ENCODE measurements at regions of chr6 and their contacts with region 1.

Region 1: DNA sequence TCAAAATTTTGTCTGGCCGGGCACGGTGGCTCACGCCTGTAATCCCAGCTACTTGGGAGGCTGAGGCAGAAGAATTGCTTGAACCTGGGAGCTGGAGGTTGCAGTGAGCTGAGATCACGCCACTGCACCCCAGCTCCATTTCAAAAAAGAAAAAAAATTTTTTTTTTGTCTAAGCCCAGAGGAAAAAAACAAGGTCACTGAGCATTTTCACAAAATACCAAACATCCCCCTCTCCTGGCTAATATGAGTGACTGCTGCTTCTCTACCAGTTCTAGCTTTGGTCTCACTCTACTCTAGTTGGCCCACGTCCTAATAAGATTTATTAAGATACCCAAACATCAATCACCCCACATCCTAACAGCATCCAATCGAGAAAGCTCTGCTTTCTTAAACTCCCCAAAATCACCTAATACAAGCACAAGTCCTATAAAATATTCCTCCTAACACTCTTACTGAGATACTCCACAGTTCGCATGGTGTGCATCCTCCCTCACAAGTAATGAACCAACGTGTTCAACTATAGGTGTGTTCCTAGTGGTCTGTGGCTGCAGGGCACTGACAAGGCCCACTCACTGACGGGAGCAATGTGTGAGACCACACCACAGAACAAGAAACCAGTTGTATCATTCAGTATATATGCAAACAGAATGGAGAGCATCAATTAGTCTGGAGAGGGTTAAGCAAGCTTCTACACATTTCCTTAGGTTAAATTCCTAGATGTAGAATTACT is 64.2 kb downstream of the FKBP5 start:
- DNase-seq: peak in 3 of 9 experiments; percentile 58 to 79 (median 64)
- ATAC-seq: peak; percentile 86
- H3K4me3 ChIP-seq: no peak overlapping the region
- H3K4me3 Mint-ChIP-seq: peak overlapping the region; percentile 30
- H3K27ac ChIP-seq: peak overlapping the region; percentile 14 to 23
- H3K27ac Mint-ChIP-seq: peak overlapping the region; percentile 91
- H3K4me1 ChIP-seq: peaks cover 47% of the 10 kb centered on the region
- H3K4me1 Mint-ChIP-seq: peaks cover 48% of the 10 kb centered on the region
- H3K27me3 ChIP-seq: no peaks in the 10 kb centered on the region
- H3K27me3 Mint-ChIP-seq: no peaks in the 10 kb centered on the region
- CTCF ChIP-seq: peak; percentile 70

Region 2: GRCh38 chr6:35522660-35523658 is 101.5 kb before region 1 on chr6:
- CTCF ChIA-PET with region 1: interaction called, 9 read pairs
- POLR2A ChIA-PET with region 1: interaction called, 3 read pairs
- intact Hi-C with region 1: loop called (anchors 1 to 2 kb)
- DNase-seq: peak; percentile 46 to 87 (median 76)
- ATAC-seq: peak; percentile 86
- H3K4me3 ChIP-seq: peak overlapping the region in 1 of 2 experiments; percentile 9
- H3K4me3 Mint-ChIP-seq: peak overlapping the region; percentile 69
- H3K27ac ChIP-seq: no peak overlapping the region
- H3K27ac Mint-ChIP-seq: peak overlapping the region; percentile 64
- H3K4me1 ChIP-seq: peaks cover 19% of the 10 kb centered on the region
- H3K4me1 Mint-ChIP-seq: peaks cover 23% of the 10 kb centered on the region
- H3K27me3 ChIP-seq: no peaks in the 10 kb centered on the region
- H3K27me3 Mint-ChIP-seq: no peaks in the 10 kb centered on the region
- CTCF ChIP-seq: peak; percentile 96

Region 3: GRCh38 chr6:35576682-35577081 is 47.8 kb before region 1 on chr6:
- CTCF ChIA-PET with region 1: interaction called, 762 read pairs
- POLR2A ChIA-PET with region 1: interaction called, 4 read pairs
- intact Hi-C with region 1: no loop called
- DNase-seq: no peak
- ATAC-seq: no peak
- H3K4me3 ChIP-seq: no peak overlapping the region
- H3K4me3 Mint-ChIP-seq: no peak overlapping the region
- H3K27ac ChIP-seq: no peak overlapping the region
- H3K27ac Mint-ChIP-seq: no peak overlapping the region
- H3K4me1 ChIP-seq: peaks cover 3% of the 10 kb centered on the region
- H3K4me1 Mint-ChIP-seq: peaks cover 7% of the 10 kb centered on the region
- H3K27me3 ChIP-seq: no peaks in the 10 kb centered on the region
- H3K27me3 Mint-ChIP-seq: no peaks in the 10 kb centered on the region
- CTCF ChIP-seq: no peak

Region 4: GRCh38 chr6:35601331-35602132 is 23.0 kb before region 1 on chr6:
- CTCF ChIA-PET with region 1: interaction called, 762 read pairs
- POLR2A ChIA-PET with region 1: interaction called, 68 read pairs
- intact Hi-C with region 1: loop called (anchors 1 kb)
- DNase-seq: peak; percentile 36 to 94 (median 69)
- ATAC-seq: peak; percentile 78
- H3K4me3 ChIP-seq: peak overlapping the region; percentile 27 to 47
- H3K4me3 Mint-ChIP-seq: peak overlapping the region; percentile 76
- H3K27ac ChIP-seq: peak overlapping the region; percentile 50 to 63
- H3K27ac Mint-ChIP-seq: peak overlapping the region; percentile 93
- H3K4me1 ChIP-seq: peaks cover 89% of the 10 kb centered on the region
- H3K4me1 Mint-ChIP-seq: peaks cover 76% of the 10 kb centered on the region
- H3K27me3 ChIP-seq: no peaks in the 10 kb centered on the region
- H3K27me3 Mint-ChIP-seq: no peaks in the 10 kb centered on the region
- CTCF ChIP-seq: no peak

Region 5: DNA sequence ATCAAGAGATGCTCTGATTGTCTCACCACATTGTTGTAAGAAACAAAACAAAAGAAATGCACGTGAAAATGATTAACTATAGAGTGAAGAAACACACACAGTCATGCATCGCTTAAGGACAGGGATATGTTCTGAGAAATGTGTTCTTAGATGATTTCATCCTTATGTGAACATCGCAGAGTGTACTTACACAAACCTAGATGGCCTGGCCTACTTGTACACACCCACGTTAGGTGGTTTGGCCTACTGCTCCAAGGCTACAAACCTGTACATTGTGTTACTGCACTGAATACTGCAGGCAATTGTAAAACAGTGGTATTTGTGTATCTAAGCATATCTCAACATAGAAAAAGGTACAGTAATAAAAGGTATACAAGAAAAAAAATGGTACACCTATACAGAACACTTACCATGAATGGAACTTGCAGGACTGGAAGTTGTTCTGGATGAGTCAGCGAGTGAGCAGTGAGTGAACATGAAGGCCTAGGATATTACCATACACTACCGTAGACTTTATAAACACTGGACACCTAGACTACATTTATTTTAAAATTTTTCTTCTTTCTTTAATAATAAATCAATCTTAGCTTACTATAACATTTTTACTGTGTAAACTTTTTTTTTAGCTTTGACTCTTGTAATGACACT is 15.6 kb after region 1 on chr6:
- CTCF ChIA-PET with region 1: interaction called, 27 read pairs
- POLR2A ChIA-PET with region 1: interaction called, 7 read pairs
- intact Hi-C with region 1: no loop called
- DNase-seq: no peak
- ATAC-seq: no peak
- H3K4me3 ChIP-seq: no peak overlapping the region
- H3K4me3 Mint-ChIP-seq: no peak overlapping the region
- H3K27ac ChIP-seq: no peak overlapping the region
- H3K27ac Mint-ChIP-seq: peak overlapping the region; percentile 83
- H3K4me1 ChIP-seq: peaks cover 21% of the 10 kb centered on the region
- H3K4me1 Mint-ChIP-seq: peaks cover 59% of the 10 kb centered on the region
- H3K27me3 ChIP-seq: no peaks in the 10 kb centered on the region
- H3K27me3 Mint-ChIP-seq: no peaks in the 10 kb centered on the region
- CTCF ChIP-seq: no peak

Region 6: DNA sequence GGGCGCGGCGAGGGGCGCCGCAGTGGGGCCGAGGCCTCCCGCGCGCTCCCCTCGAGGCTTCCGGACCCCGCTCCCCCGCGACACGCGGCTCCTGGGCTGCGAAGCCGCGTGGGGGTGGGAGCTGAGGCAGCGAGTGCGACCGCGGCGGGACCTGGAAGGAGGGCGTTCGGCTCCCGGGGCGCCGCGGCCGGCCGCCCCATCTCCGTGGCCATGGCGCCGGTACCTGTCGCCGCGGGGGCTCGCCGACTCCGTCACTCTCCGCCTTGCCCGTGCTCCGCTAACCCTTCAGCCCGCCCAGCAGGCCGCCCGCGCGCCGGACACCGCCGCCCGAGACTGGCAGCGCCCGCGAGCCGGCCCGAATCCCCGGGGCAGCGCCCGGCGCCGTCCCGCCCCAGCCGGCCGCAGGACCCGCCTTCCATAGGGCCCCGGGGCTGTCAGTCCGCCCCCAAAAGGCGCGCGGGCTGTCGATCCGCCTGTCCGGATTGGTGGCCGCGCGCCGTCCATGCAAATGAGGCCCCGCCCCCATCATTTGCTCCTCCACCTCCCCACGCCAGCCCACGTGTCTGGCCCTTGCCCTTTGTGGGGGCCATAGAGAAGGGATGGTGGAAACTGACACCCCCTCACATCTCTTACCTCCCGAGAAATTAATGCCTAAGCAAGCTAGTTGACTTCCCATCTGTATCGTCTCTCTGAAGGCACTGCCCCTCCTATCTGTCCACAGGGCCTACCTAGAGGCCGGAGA is 64.2 kb after region 1 on chr6 and contains the start of gene FKBP5:
- CTCF ChIA-PET with region 1: interaction called, 17 read pairs
- POLR2A ChIA-PET with region 1: no interaction called
- intact Hi-C with region 1: loop called in 1 of 2 experiments (anchors 2 kb)
- DNase-seq: peak; percentile 65 to 93 (median 87)
- ATAC-seq: peak; percentile 87
- H3K4me3 ChIP-seq: peak within 1 kb of the TSS; percentile 63 to 85
- H3K4me3 Mint-ChIP-seq: peak within 1 kb of the TSS; percentile 98
- H3K27ac ChIP-seq: peak within 1 kb of the TSS; percentile 48 to 64
- H3K27ac Mint-ChIP-seq: peak within 1 kb of the TSS; percentile 96
- H3K4me1 ChIP-seq: peaks cover 14% of the 10 kb centered on the region
- H3K4me1 Mint-ChIP-seq: peaks cover 17% of the 10 kb centered on the region
- H3K27me3 ChIP-seq: no peaks in the 10 kb centered on the region
- H3K27me3 Mint-ChIP-seq: no peaks in the 10 kb centered on the region
- CTCF ChIP-seq: no peak
- total RNA-seq, gene FKBP5: 25.7 to 27.1 TPM

Region 7: GRCh38 chr6:35786810-35787209 is 162.3 kb after region 1 on chr6:
- CTCF ChIA-PET with region 1: no interaction called
- POLR2A ChIA-PET with region 1: no interaction called
- intact Hi-C with region 1: no loop called
- DNase-seq: no peak
- ATAC-seq: no peak
- H3K4me3 ChIP-seq: no peak overlapping the region
- H3K4me3 Mint-ChIP-seq: no peak overlapping the region
- H3K27ac ChIP-seq: no peak overlapping the region
- H3K27ac Mint-ChIP-seq: no peak overlapping the region
- H3K4me1 ChIP-seq: no peaks in the 10 kb centered on the region
- H3K4me1 Mint-ChIP-seq: no peaks in the 10 kb centered on the region
- H3K27me3 ChIP-seq: peaks cover 11 to 14% of the 10 kb centered on the region in 2 experiments
- H3K27me3 Mint-ChIP-seq: peaks cover 58% of the 10 kb centered on the region
- CTCF ChIP-seq: no peak

Measured in CD8-positive, alpha-beta T cell (primary cell).